ENCODE measurements at regions of chr6 and their contacts with region 1.

Region 1: DNA sequence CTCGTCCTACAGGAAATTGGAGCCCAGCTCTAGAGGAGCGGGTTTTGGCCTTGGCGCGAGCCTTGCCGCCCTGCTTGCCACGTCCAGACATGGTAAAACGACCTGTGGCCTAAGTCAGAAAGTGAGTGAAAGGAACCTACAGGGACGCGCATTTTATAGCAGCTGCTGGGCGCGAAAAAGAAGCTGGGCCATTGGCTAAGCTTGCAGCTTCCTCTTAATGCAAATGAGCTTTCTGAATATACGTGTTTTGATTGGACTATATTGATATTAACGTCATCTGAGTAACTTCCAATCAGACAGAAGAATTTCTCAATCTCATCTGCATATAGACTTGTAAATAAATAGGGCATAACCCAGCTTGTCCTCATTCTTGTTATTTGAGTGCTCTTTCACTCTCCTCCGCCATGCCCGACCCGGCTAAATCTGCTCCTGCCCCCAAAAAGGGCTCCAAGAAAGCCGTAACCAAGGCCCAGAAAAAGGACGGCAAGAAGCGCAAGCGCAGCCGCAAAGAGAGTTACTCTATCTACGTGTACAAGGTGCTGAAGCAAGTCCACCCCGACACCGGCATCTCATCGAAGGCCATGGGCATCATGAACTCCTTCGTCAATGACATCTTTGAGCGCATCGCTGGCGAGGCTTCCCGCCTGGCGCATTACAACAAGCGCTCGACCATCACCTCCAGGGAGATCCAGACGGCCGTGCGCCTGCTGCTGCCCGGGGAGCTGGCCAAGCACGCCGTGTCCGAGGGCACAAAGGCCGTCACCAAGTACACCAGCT is 18.9 kb downstream of the OR2B2 start:
- DNase-seq: peak; percentile 76 to 98 (median 85)
- ATAC-seq: peak; percentile 73
- H3K4me3 ChIP-seq: peak overlapping the region; percentile 74
- H3K4me3 Mint-ChIP-seq: no peak overlapping the region
- H3K27ac ChIP-seq: peak overlapping the region; percentile 84 to 86
- H3K27ac Mint-ChIP-seq: no peak overlapping the region
- H3K4me1 ChIP-seq: peaks cover 49% of the 10 kb centered on the region
- H3K4me1 Mint-ChIP-seq: peaks cover 29% of the 10 kb centered on the region
- H3K27me3 ChIP-seq: no peaks in the 10 kb centered on the region
- H3K27me3 Mint-ChIP-seq: no peaks in the 10 kb centered on the region
- CTCF ChIP-seq: no peak

Region 2: DNA sequence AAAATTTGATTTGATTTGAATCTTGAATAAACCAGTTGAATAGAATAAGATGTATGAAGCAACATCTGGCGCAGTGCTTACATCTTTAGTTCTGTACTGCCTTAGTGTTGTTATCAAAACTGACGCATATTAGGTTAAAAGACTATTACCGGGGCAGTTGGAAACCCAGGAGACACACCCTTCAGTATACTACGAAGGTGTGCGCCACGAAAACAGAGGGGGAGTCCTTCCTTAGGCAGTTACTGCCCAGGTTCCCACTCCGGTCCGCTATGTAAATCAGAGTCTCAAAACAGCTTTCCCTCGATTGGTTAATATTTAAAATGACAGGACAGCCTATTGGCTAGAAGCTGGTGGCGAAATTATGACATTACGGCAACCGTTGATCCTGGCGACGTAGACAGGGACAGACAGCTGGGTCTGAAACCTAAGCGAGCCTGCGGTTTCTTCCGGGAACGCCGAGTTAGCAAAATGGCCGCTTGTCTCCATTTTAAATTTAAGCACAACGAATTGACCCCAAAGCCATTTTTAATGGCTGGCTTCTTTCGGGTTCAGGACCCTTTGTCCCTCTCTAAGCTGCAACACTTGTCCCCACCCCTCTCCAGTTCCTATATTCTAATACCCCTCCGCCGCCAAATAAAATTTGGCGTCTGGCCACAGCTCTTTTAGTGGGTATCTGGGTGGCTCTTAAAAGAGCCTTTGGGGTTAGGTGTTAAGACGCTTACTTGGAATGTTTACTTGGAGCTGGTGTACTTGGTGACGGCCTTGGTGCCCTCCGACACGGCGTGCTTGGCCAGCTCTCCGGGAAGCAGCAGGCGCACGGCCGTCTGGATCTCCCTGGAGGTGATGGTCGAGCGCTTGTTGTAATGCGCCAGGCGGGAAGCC is 1770.2 kb before region 1 on chr6:
- CTCF ChIA-PET with region 1: no interaction called
- POLR2A ChIA-PET with region 1: interaction called, 84 read pairs
- intact Hi-C with region 1: no loop called
- DNase-seq: peak; percentile 75 to 98 (median 92)
- ATAC-seq: peak; percentile 56
- H3K4me3 ChIP-seq: peak overlapping the region; percentile 88
- H3K4me3 Mint-ChIP-seq: peak overlapping the region; percentile 97
- H3K27ac ChIP-seq: peak overlapping the region; percentile 84 to 95
- H3K27ac Mint-ChIP-seq: peak overlapping the region; percentile 98
- H3K4me1 ChIP-seq: peaks cover 23% of the 10 kb centered on the region
- H3K4me1 Mint-ChIP-seq: peaks cover 41% of the 10 kb centered on the region
- H3K27me3 ChIP-seq: no peaks in the 10 kb centered on the region
- H3K27me3 Mint-ChIP-seq: peaks cover 13% of the 10 kb centered on the region
- CTCF ChIP-seq: no peak

Region 3: GRCh38 chr6:26537846-26538571 is 1355.2 kb before region 1 on chr6 and contains the start of gene HMGN4:
- CTCF ChIA-PET with region 1: no interaction called
- POLR2A ChIA-PET with region 1: interaction called, 12 read pairs
- intact Hi-C with region 1: no loop called
- DNase-seq: peak; percentile 66 to 97 (median 76)
- ATAC-seq: peak; percentile 70
- H3K4me3 ChIP-seq: peak within 1 kb of the TSS; percentile 93
- H3K4me3 Mint-ChIP-seq: peak within 1 kb of the TSS; percentile 94
- H3K27ac ChIP-seq: peak within 1 kb of the TSS; percentile 84 to 91
- H3K27ac Mint-ChIP-seq: peak within 1 kb of the TSS; percentile 98
- H3K4me1 ChIP-seq: peaks cover 51% of the 10 kb centered on the region
- H3K4me1 Mint-ChIP-seq: peaks cover 57% of the 10 kb centered on the region
- H3K27me3 ChIP-seq: no peaks in the 10 kb centered on the region
- H3K27me3 Mint-ChIP-seq: peaks cover 13% of the 10 kb centered on the region
- CTCF ChIP-seq: no peak
- total RNA-seq, gene HMGN4: 22.7 to 24.8 TPM

Region 4: GRCh38 chr6:27188885-27189418 is 704.3 kb before region 1 on chr6:
- CTCF ChIA-PET with region 1: no interaction called
- POLR2A ChIA-PET with region 1: interaction called, 9 read pairs
- intact Hi-C with region 1: loop called in 1 of 2 experiments (anchors 2 kb)
- DNase-seq: peak in 9 of 14 experiments; percentile 28 to 86 (median 39)
- ATAC-seq: peak; percentile 85
- H3K4me3 ChIP-seq: peak overlapping the region; percentile 66
- H3K4me3 Mint-ChIP-seq: peak overlapping the region; percentile 88
- H3K27ac ChIP-seq: no peak overlapping the region
- H3K27ac Mint-ChIP-seq: peak overlapping the region; percentile 3
- H3K4me1 ChIP-seq: peaks cover 18% of the 10 kb centered on the region
- H3K4me1 Mint-ChIP-seq: peaks cover 13% of the 10 kb centered on the region
- H3K27me3 ChIP-seq: no peaks in the 10 kb centered on the region
- H3K27me3 Mint-ChIP-seq: peaks cover 9% of the 10 kb centered on the region
- CTCF ChIP-seq: peak; percentile 85

Region 5: GRCh38 chr6:27237089-27237803 is 656.0 kb before region 1 on chr6:
- CTCF ChIA-PET with region 1: no interaction called
- POLR2A ChIA-PET with region 1: no interaction called
- intact Hi-C with region 1: no loop called
- DNase-seq: peak in 4 of 14 experiments; percentile 6 to 43 (median 31)
- ATAC-seq: no peak
- H3K4me3 ChIP-seq: no peak overlapping the region
- H3K4me3 Mint-ChIP-seq: peak overlapping the region; percentile 75
- H3K27ac ChIP-seq: no peak overlapping the region
- H3K27ac Mint-ChIP-seq: peak overlapping the region; percentile 83
- H3K4me1 ChIP-seq: peaks cover 10% of the 10 kb centered on the region
- H3K4me1 Mint-ChIP-seq: peaks cover 31% of the 10 kb centered on the region
- H3K27me3 ChIP-seq: peaks cover 52 to 75% of the 10 kb centered on the region in 2 experiments
- H3K27me3 Mint-ChIP-seq: peaks cover 85% of the 10 kb centered on the region
- CTCF ChIP-seq: no peak

Region 6: DNA sequence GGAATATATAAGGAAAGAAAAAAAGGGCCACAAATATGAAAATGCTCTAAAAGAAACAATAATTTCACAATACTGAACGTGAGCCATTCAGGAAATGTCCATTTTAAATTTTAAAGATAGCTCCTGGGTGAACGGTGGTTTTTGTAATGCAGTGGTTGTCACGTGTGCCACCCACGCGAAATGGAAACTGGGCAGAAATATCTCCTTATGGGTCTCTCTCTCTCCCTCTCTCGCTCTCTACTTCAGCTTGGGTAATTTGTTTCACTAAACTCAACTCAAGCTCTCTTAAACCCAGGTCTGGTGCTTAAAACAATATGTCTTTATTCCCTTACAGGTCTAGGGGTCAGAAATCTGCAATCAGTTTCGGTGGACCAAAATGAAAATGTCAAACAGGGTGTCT is 131.9 kb before region 1 on chr6:
- CTCF ChIA-PET with region 1: no interaction called
- POLR2A ChIA-PET with region 1: interaction called, 37 read pairs
- intact Hi-C with region 1: no loop called
- DNase-seq: peak in 2 of 14 experiments; percentile 11 to 17
- ATAC-seq: peak; percentile 41
- H3K4me3 ChIP-seq: no peak overlapping the region
- H3K4me3 Mint-ChIP-seq: peak overlapping the region; percentile 94
- H3K27ac ChIP-seq: no peak overlapping the region
- H3K27ac Mint-ChIP-seq: peak overlapping the region; percentile 98
- H3K4me1 ChIP-seq: peaks cover 14% of the 10 kb centered on the region
- H3K4me1 Mint-ChIP-seq: peaks cover 40% of the 10 kb centered on the region
- H3K27me3 ChIP-seq: no peaks in the 10 kb centered on the region
- H3K27me3 Mint-ChIP-seq: peaks cover 2% of the 10 kb centered on the region
- CTCF ChIP-seq: no peak

Region 7: GRCh38 chr6:27838058-27838944 is 54.9 kb before region 1 on chr6:
- CTCF ChIA-PET with region 1: interaction called, 17 read pairs
- POLR2A ChIA-PET with region 1: interaction called, 635 read pairs
- intact Hi-C with region 1: loop called (anchors 1 to 5 kb)
- DNase-seq: peak; percentile 52 to 98 (median 73)
- ATAC-seq: peak; percentile 73
- H3K4me3 ChIP-seq: peak overlapping the region; percentile 83
- H3K4me3 Mint-ChIP-seq: no peak overlapping the region
- H3K27ac ChIP-seq: peak overlapping the region; percentile 92 to 97
- H3K27ac Mint-ChIP-seq: no peak overlapping the region
- H3K4me1 ChIP-seq: peaks cover 32% of the 10 kb centered on the region
- H3K4me1 Mint-ChIP-seq: peaks cover 6% of the 10 kb centered on the region
- H3K27me3 ChIP-seq: peaks cover 0 to 6% of the 10 kb centered on the region in 2 experiments
- H3K27me3 Mint-ChIP-seq: peaks cover 12% of the 10 kb centered on the region
- CTCF ChIP-seq: no peak

Region 8: DNA sequence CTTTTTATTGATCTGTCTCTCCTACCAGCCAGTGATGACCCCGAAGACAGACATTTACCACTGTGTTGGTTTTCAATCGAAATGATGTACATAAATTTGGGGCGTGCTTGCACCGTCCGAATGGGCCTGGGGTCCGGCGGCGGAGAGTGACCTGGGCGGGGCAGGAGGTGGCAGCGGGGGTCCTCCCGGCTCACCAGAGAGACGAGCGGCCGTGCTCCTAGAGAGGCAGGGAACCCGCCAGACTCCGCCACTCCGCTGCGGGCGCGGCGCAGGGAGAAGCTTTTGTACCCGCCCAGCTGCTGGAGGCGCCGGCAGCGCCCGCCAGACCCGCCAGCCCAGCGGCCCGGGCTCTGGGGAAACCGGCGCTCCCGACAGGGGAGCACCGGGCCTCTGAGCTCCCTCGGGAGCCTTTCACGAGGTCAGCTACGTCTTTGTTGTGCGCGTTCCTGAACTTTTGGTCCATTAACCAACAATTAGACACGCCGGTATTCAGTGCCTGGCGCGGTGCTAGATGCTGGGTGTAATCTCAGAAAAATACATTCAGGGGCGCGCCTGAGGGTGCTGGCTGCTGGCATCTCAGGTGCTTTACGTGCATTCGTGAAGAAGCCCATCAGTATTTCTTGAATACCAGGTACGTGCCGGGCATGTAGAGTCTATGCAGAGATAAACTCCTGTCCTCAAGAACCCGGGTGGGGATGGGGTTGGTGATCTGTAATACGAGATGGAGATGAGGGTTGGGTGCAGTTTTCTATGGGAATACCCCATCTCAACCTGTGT is 388.2 kb after region 1 on chr6 and contains the start of gene PGBD1:
- CTCF ChIA-PET with region 1: no interaction called
- POLR2A ChIA-PET with region 1: no interaction called
- intact Hi-C with region 1: no loop called
- DNase-seq: peak in 10 of 14 experiments; percentile 13 to 58 (median 34)
- ATAC-seq: peak; percentile 55
- H3K4me3 ChIP-seq: peak within 1 kb of the TSS; percentile 46
- H3K4me3 Mint-ChIP-seq: peak within 1 kb of the TSS; percentile 67
- H3K27ac ChIP-seq: no peak within 1 kb of the TSS
- H3K27ac Mint-ChIP-seq: no peak within 1 kb of the TSS
- H3K4me1 ChIP-seq: peaks cover 10% of the 10 kb centered on the region
- H3K4me1 Mint-ChIP-seq: peaks cover 8% of the 10 kb centered on the region
- H3K27me3 ChIP-seq: peaks cover 12 to 33% of the 10 kb centered on the region in 2 experiments
- H3K27me3 Mint-ChIP-seq: peaks cover 48% of the 10 kb centered on the region
- CTCF ChIP-seq: no peak
- total RNA-seq, gene PGBD1: 1.3 to 1.4 TPM